ENCODE measurements at regions of chr2 and their contacts with region 1.

Region 1: GRCh38 chr2:195656859-195657633 is at the start of gene SLC39A10:
- DNase-seq: peak; percentile 97
- ATAC-seq: peak; percentile 84
- H3K4me3 Mint-ChIP-seq: peak within 1 kb of the TSS; percentile 98
- H3K27ac Mint-ChIP-seq: peak within 1 kb of the TSS; percentile 99
- H3K4me1 Mint-ChIP-seq: peaks cover 64% of the 10 kb centered on the region
- H3K27me3 Mint-ChIP-seq: no peaks in the 10 kb centered on the region
- CTCF ChIP-seq: no peak
- total RNA-seq, gene SLC39A10: 45.7 and 52.3 TPM in 2 replicates

Region 2: GRCh38 chr2:195094330-195094729 is 562.7 kb before region 1 on chr2:
- CTCF ChIA-PET with region 1: no interaction called
- POLR2A ChIA-PET with region 1: no interaction called
- intact Hi-C with region 1: loop called (anchors 1 kb)
- DNase-seq: no peak
- ATAC-seq: no peak
- H3K4me3 Mint-ChIP-seq: no peak overlapping the region
- H3K27ac Mint-ChIP-seq: no peak overlapping the region
- H3K4me1 Mint-ChIP-seq: no peaks in the 10 kb centered on the region
- H3K27me3 Mint-ChIP-seq: no peaks in the 10 kb centered on the region
- CTCF ChIP-seq: no peak

Region 3: DNA sequence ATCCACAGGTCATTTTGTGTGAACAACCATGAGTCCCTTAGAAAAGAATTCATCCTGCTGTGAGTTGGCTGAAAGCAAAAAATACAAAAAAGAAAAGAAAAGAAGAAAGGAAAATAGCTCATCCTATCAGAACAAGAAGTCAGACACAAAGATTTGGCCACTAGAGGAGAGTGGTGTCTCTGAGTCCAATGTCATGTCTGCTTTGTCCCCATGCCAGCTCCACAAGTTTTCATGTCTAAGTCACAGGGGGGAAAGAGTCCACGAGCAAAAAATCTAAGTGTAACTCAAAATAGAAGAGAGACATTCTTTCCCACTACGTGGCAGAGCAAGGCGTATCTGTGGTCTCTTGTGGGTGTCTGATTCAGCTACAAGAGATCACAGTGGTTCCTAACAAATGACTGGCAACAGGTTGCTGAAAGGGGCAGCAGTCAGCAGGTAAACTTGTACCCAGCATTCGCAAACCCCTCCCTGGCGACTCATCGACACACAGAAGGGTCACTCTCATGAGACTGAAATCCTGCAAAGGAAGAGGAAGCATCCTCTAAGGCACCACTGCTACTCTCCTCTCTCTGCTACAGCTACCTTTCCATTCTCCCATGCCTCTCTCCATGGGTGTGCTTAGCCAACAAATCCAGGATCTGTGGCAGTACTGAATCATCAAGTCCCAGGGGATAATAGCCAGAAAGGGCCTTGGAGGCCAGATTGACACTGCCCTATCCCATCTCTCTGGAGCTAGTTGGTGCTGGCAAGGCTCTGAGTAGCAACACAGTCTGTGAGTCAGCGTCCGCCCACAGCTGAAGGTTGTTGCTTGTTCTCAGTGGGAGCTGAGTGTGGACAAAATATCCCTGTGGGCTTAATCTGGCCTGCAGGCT is 123.0 kb before region 1 on chr2:
- CTCF ChIA-PET with region 1: interaction called, 61 read pairs
- POLR2A ChIA-PET with region 1: interaction called, 115 read pairs
- intact Hi-C with region 1: loop called (anchors 1 kb)
- DNase-seq: peak; percentile 28
- ATAC-seq: peak; percentile 73
- H3K4me3 Mint-ChIP-seq: peak overlapping the region; percentile 66
- H3K27ac Mint-ChIP-seq: peak overlapping the region; percentile 97
- H3K4me1 Mint-ChIP-seq: peaks cover 72% of the 10 kb centered on the region
- H3K27me3 Mint-ChIP-seq: no peaks in the 10 kb centered on the region
- CTCF ChIP-seq: no peak

Region 4: GRCh38 chr2:195594248-195594647 is 62.8 kb before region 1 on chr2:
- CTCF ChIA-PET with region 1: interaction called, 11 read pairs
- POLR2A ChIA-PET with region 1: interaction called, 51 read pairs
- intact Hi-C with region 1: no loop called
- DNase-seq: no peak
- ATAC-seq: no peak
- H3K4me3 Mint-ChIP-seq: no peak overlapping the region
- H3K27ac Mint-ChIP-seq: peak overlapping the region; percentile 9
- H3K4me1 Mint-ChIP-seq: peaks cover 29% of the 10 kb centered on the region
- H3K27me3 Mint-ChIP-seq: no peaks in the 10 kb centered on the region
- CTCF ChIP-seq: no peak

Region 5: GRCh38 chr2:196068271-196069209 is 411.5 kb after region 1 on chr2 and contains the start of gene DNAH7:
- CTCF ChIA-PET with region 1: interaction called, 21 read pairs
- POLR2A ChIA-PET with region 1: interaction called, 3 read pairs
- intact Hi-C with region 1: loop called (anchors 1 kb)
- DNase-seq: peak; percentile 83
- ATAC-seq: peak; percentile 94
- H3K4me3 Mint-ChIP-seq: peak within 1 kb of the TSS; percentile 93
- H3K27ac Mint-ChIP-seq: peak within 1 kb of the TSS; percentile 91
- H3K4me1 Mint-ChIP-seq: peaks cover 12% of the 10 kb centered on the region
- H3K27me3 Mint-ChIP-seq: peaks cover under 1% of the 10 kb centered on the region
- CTCF ChIP-seq: peak; percentile 47
- total RNA-seq, gene DNAH7: 0.17 and 0.29 TPM in 2 replicates

Region 6: GRCh38 chr2:197145471-197146138 is 1488.6 kb after region 1 on chr2:
- CTCF ChIA-PET with region 1: no interaction called
- POLR2A ChIA-PET with region 1: no interaction called
- intact Hi-C with region 1: loop called (anchors 10 kb)
- DNase-seq: no peak
- ATAC-seq: peak; percentile 91
- H3K4me3 Mint-ChIP-seq: peak overlapping the region; percentile 67
- H3K27ac Mint-ChIP-seq: peak overlapping the region; percentile 97
- H3K4me1 Mint-ChIP-seq: peaks cover 91% of the 10 kb centered on the region
- H3K27me3 Mint-ChIP-seq: no peaks in the 10 kb centered on the region
- CTCF ChIP-seq: no peak